ENCODE measurements at regions of chr15 and their contacts with region 1.

Region 1: DNA sequence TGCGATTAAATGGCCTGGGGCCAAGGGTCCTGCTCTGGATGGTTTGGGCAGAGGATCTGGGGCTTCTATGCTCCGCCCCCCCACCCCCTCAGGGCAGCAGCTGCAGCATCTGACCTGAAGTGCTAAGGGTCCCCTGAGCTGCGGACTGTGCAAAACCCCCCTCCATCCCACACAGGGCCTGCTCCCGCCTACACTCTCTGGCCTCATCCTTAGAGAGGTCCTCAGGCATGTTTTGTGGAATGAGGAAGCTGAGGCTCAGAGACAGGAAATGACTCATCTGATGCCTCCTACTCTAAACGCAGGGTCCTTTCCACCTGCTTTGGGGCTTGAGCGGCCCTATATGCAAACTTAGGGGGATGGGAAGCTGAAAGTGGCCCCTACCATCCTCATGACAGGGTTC is 59.5 kb upstream of the CTSH start:
- DNase-seq: peak in 1 of 2 experiments; percentile 72
- ATAC-seq: peak; percentile 35 to 73; a peak in 5 of 6 replicates
- H3K4me3 ChIP-seq: no peak overlapping the region
- H3K27ac ChIP-seq: peak overlapping the region; percentile 46 to 80
- H3K4me1 ChIP-seq: peaks cover 11% of the 10 kb centered on the region
- CTCF ChIP-seq: no peak
- EP300 ChIP-seq: no peak
- POLR2A ChIP-seq: no peak
- RAD21 ChIP-seq: no peak

Region 2: DNA sequence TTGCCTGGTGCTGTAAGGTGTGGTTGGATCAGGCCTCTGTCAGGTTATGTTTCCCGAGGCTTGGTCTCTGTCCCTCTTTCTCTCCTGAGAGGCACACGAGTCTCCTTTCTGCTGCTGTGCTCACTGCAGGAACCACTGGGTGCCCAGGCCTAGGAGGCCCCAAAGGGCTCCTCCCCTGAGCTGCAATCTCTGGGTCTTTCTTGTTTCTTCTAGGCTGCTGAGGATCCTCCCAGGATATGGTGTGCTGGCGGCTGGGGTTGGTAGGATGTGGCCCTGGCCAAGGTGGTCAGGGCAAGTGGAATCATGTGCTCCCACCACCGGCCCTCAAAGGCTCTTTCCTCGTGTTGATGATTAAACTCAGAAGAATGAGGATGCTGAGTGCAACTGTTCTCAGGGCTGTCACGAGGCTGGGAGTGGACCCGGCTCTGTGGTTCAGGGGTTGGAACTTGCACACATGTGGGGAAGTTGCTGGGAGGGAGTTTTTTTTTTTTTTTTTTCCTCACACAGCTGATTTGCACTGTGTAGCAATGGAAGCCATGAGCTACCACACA is 15.9 kb before region 1 on chr15:
- CTCF ChIA-PET with region 1: interaction called, 12 read pairs
- POLR2A ChIA-PET with region 1: interaction called, 3 read pairs
- DNase-seq: peak; percentile 91 to 95
- ATAC-seq: peak; percentile 92 to 93
- H3K4me3 ChIP-seq: no peak overlapping the region
- H3K27ac ChIP-seq: peak overlapping the region; percentile 74 to 90
- H3K4me1 ChIP-seq: peaks cover 17% of the 10 kb centered on the region
- CTCF ChIP-seq: no peak
- EP300 ChIP-seq: no peak
- POLR2A ChIP-seq: no peak
- RAD21 ChIP-seq: no peak

Region 3: DNA sequence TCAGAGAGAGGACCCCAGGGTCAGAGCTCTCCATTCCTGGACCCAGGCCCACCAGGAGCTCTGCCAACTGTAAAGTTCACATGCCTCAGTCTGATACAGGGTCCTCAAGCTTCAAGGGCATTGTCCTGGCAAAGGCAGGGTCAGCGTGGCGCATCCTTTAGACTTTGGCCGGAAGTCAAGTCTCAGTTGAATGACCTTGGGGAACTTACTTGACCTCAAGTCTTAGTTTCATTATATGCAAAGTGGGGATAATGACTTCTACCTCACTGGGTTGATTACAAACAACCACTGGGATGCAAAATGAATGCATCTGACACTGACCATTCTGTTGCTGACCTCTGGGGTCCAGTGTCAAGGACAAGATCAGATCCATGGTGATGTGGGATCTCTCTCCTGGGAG is 11.1 kb after region 1 on chr15:
- CTCF ChIA-PET with region 1: interaction called, 17 read pairs
- POLR2A ChIA-PET with region 1: no interaction called
- DNase-seq: no peak
- ATAC-seq: no peak
- H3K4me3 ChIP-seq: no peak overlapping the region
- H3K27ac ChIP-seq: no peak overlapping the region
- H3K4me1 ChIP-seq: no peaks in the 10 kb centered on the region
- CTCF ChIP-seq: no peak
- EP300 ChIP-seq: no peak
- POLR2A ChIP-seq: no peak
- RAD21 ChIP-seq: no peak

Region 4: DNA sequence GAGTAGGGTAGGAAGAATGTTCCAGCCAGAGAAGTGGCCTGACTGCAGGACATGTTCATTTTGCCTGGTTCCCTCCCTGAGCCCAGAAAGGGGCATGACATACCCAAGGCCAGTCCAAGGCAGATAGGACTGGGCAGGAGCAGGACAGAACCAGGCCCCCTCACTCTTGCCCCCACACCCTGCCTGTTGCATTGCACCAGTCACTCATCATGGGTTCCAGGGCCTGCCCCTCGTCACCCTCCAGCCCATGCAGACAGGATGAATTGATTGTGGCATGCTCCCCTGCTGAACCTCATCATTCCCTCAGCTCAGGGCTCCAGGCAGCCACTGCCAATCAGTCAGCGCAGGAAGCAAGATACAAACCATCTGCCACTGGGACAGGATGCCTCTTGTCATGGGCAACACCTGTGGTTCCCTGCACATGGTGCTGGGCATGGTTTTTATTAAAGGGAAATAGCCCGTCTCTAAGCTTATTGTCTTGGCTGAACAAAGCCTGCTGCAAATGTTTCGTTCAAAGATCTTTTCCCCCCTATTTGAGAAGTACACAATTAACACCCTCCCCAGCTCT is 37.3 kb after region 1 on chr15:
- CTCF ChIA-PET with region 1: no interaction called
- POLR2A ChIA-PET with region 1: no interaction called
- DNase-seq: no peak
- ATAC-seq: no peak
- H3K4me3 ChIP-seq: no peak overlapping the region
- H3K27ac ChIP-seq: no peak overlapping the region
- H3K4me1 ChIP-seq: no peaks in the 10 kb centered on the region
- CTCF ChIP-seq: no peak
- EP300 ChIP-seq: no peak
- POLR2A ChIP-seq: no peak
- RAD21 ChIP-seq: no peak

Measured in A549 (cell line).